ENCODE measurements at regions of chr11 and their contacts with region 1.

Region 1: GRCh38 chr11:33027846-33028536 is 11.4 kb upstream of the TCP11L1 start:
- DNase-seq: no peak
- H3K4me3 ChIP-seq: no peak overlapping the region
- H3K27ac ChIP-seq: no peak overlapping the region
- H3K4me1 ChIP-seq: no peaks in the 10 kb centered on the region
- H3K27me3 ChIP-seq: no peaks in the 10 kb centered on the region
- CTCF ChIP-seq: no peak
- EP300 ChIP-seq: no peak
- POLR2A ChIP-seq: no peak
- RAD21 ChIP-seq: no peak

Region 2: DNA sequence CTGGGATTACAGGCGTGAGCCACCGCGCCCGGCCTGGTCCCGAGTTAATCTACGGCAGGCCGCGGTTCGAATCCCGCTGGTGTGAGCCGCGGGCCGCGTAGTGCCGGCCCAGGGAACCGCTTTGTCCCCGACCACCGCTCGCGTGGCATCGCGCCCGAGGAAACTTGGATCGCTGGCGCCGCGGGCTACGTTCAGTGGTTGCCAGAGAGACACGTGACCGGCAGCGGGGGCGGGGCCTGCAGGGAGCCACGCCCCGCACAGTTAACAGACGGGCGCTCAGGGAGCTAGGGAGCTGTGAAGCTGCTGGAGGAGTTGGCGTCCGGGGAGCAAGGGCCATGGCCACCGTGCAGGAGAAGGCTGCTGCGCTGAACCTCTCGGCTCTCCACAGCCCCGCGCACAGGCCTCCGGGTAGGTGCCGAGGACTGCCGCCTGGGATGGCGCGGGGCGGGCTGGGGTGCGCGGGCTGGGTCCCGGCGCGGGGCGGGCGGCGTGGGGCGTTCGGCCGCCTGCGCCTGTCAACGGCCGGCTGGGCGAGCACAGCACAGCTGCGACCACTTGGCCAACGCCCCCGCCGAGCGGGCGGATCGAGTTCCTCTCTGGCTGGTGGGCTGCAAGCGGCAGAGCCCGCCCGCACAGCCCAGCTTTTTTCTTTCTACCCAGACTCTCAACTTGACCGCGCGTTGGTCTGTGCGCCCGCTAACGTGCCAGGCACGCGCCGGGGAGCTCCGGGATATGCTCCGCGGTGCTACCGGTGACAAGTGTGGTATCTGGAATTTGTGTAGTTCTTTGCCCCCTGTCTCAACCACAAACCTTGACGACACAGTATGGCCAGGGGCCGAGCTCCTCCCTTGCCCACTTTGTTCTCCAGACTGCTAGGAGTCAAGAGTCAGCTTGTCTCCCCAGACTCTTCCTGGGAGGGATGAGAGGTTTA is 12.1 kb before region 1 on chr11 and contains the start of gene DEPDC7:
- CTCF ChIA-PET with region 1: interaction called, 13 read pairs
- POLR2A ChIA-PET with region 1: interaction called, 12 read pairs
- DNase-seq: peak; percentile 76 to 96
- H3K4me3 ChIP-seq: peak within 1 kb of the TSS; percentile 49 to 70 (median 66)
- H3K27ac ChIP-seq: no peak within 1 kb of the TSS
- H3K4me1 ChIP-seq: peaks cover 3 to 6% (median 3%) of the 10 kb centered on the region in 4 experiments; a peak in 6 of 7 replicates
- H3K27me3 ChIP-seq: peaks cover 0 to 12% (median 5%) of the 10 kb centered on the region in 4 experiments; a peak in 4 of 7 replicates
- CTCF ChIP-seq: no peak
- EP300 ChIP-seq: no peak
- POLR2A ChIP-seq: peak; percentile 48 to 64
- RAD21 ChIP-seq: no peak
- total RNA-seq, gene DEPDC7: 6.3 and 7.6 TPM in 2 replicates

Region 3: GRCh38 chr11:33052231-33052630 is 24.2 kb after region 1 on chr11:
- CTCF ChIA-PET with region 1: no interaction called
- POLR2A ChIA-PET with region 1: no interaction called
- DNase-seq: no peak
- H3K4me3 ChIP-seq: no peak overlapping the region
- H3K27ac ChIP-seq: no peak overlapping the region
- H3K4me1 ChIP-seq: no peaks in the 10 kb centered on the region
- H3K27me3 ChIP-seq: no peaks in the 10 kb centered on the region
- CTCF ChIP-seq: no peak
- EP300 ChIP-seq: no peak
- POLR2A ChIP-seq: no peak
- RAD21 ChIP-seq: no peak